IMR-90 (cell line): ENCODE measurements at regions of chr14 and their contacts with region 1.

Region 1: GRCh38 chr14:58362798-58363412 is 32.8 kb upstream of the TOMM20L start:
- DNase-seq: peak; percentile 17
- ATAC-seq: no peak
- H3K4me3 ChIP-seq: no peak overlapping the region
- H3K27ac ChIP-seq: no peak overlapping the region
- H3K4me1 ChIP-seq: no peaks in the 10 kb centered on the region
- H3K27me3 ChIP-seq: no peaks in the 10 kb centered on the region
- CTCF ChIP-seq: peak; percentile 21; the same call in 1 of the 2 replicates
- POLR2A ChIP-seq: no peak
- RAD21 ChIP-seq: no peak

Region 2: GRCh38 chr14:58315606-58316005 is 47.3 kb before region 1 on chr14:
- CTCF ChIA-PET with region 1: no interaction called
- POLR2A ChIA-PET with region 1: no interaction called
- dilution Hi-C with region 1: no loop called
- in situ Hi-C with region 1: no loop called
- intact Hi-C with region 1: loop called (anchors 5 kb)
- DNase-seq: peak; percentile 2
- ATAC-seq: no peak
- H3K4me3 ChIP-seq: no peak overlapping the region
- H3K27ac ChIP-seq: no peak overlapping the region
- H3K4me1 ChIP-seq: no peaks in the 10 kb centered on the region
- H3K27me3 ChIP-seq: no peaks in the 10 kb centered on the region
- CTCF ChIP-seq: no peak
- POLR2A ChIP-seq: no peak
- RAD21 ChIP-seq: no peak

Region 3: DNA sequence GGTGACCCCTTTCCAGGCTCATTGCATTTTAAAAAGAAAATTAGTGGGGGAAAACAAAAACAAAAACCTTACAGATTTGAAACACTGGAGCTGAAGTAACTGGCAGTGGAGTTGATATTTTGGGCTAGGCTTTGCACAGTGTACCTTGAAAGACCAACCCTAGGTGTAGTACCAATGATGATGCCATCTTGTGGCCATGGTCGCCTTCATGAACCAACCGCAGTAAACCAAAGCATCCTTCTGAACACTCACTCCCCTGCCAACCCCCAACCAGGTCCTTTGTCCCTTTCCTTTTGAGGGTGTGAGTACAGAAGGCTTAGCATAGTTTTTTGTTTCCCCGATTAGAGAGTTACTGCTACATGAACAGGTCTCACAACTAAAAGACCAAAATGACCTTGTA is 38.7 kb after region 1 on chr14:
- CTCF ChIA-PET with region 1: no interaction called
- POLR2A ChIA-PET with region 1: no interaction called
- dilution Hi-C with region 1: no loop called
- in situ Hi-C with region 1: no loop called
- intact Hi-C with region 1: loop called (anchors 1 kb)
- DNase-seq: no peak
- ATAC-seq: no peak
- H3K4me3 ChIP-seq: no peak overlapping the region
- H3K27ac ChIP-seq: no peak overlapping the region
- H3K4me1 ChIP-seq: no peaks in the 10 kb centered on the region
- H3K27me3 ChIP-seq: no peaks in the 10 kb centered on the region
- CTCF ChIP-seq: no peak
- POLR2A ChIP-seq: no peak
- RAD21 ChIP-seq: no peak